Mammary epithelial cell (primary cell): ENCODE measurements at regions of chr17 and their contacts with region 1.

Region 1: DNA sequence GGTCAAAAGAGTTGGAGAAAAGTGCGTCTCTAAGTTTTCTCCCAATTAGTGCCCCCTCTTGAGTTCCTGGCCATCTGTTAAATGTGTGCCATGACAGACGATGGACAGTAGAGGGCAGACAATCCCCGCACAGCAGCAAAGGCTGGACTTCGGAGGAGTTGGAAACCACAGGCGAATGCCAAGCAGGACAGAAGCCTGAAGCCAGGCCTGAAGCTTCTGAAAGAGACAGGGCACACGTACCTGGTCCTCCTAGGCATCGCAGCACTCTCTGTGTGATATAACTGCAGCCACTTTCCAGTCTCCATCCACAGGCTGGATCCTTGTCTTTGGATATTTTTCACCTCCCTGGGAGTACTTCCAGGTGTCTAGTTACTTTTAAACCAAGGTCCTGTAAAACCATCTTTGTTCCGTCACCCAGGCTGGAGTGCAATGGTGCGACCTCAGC is 14.5 kb downstream of the C17orf100 start:
- DNase-seq: peak; percentile 74
- H3K4me3 ChIP-seq: no peak overlapping the region
- H3K27ac ChIP-seq: no peak overlapping the region
- H3K4me1 ChIP-seq: peaks cover 31% of the 10 kb centered on the region
- H3K27me3 ChIP-seq: no peaks in the 10 kb centered on the region
- CTCF ChIP-seq: peak; percentile 95 to 97

Region 2: DNA sequence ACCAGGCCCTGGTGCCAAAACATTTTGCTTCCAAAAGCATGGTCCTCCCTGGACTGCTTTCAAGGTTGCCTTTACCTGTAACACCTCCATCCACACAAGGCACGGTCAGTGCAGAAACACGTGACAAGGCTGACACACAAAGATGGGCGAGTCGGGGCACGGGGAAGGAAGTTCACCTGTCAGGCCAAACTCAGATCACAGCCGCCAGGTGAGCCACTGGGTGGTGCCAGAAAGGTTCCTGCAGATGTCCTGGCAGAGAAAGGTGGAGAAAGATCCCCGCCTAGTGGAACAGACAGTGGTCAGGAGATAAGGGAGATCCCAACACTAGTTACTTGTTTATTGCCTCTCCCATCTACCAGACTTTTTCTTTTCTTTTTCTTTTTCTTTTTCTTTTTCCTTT is 386.4 kb before region 1 on chr17:
- CTCF ChIA-PET with region 1: no interaction called
- dilution Hi-C with region 1: no loop called
- in situ Hi-C with region 1: no loop called
- intact Hi-C with region 1: loop called (anchors 10 kb)
- DNase-seq: peak; percentile 88
- H3K4me3 ChIP-seq: no peak overlapping the region
- H3K27ac ChIP-seq: no peak overlapping the region
- H3K4me1 ChIP-seq: no peaks in the 10 kb centered on the region
- H3K27me3 ChIP-seq: no peaks in the 10 kb centered on the region
- CTCF ChIP-seq: peak; percentile 89 to 94

Region 3: DNA sequence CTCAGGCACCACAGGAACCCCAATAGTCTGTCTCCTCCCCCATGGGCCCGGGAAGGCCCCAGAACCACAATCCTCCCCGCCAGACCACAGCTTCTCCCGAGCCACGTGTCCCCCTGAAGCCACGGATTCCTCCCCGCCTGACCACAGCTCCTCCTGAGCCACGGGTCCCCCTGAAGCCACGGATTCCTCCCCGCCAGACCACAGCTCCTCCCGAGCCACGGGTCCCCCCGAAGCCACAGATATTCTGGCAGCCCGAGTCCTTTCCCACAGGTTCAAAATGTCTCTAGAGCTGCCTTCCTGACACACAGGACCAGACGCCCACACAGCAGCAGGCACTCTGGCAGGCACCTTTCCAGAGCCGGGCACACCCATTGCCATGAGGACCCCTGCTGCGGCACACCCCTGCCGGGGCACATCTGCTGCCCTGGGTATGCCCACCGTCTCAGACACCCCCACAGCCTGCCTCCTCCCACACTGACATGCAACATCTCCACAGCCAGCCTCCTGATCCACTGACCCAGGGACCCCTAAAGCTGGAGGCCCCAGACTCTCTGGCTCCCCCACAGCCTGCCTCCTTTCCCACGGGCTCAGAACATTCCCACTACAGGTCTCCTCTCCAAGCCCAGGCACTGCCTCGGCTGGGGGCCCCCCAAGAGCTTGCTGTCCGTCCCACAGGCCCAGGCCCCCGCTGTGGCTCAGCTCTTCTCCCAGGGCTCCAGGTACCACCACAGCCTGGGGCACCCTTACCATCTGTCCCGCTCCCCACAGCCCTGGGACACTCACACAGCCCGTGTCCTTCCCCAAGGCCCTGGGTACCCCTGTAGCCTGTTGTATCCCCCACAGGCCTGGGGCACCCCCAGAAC is 27.8 kb before region 1 on chr17:
- CTCF ChIA-PET with region 1: no interaction called
- dilution Hi-C with region 1: no loop called
- in situ Hi-C with region 1: no loop called
- intact Hi-C with region 1: no loop called
- DNase-seq: no peak
- H3K4me3 ChIP-seq: peak overlapping the region in 2 of 3 experiments; percentile 79 to 97
- H3K27ac ChIP-seq: no peak overlapping the region
- H3K4me1 ChIP-seq: peaks cover 22% of the 10 kb centered on the region
- H3K27me3 ChIP-seq: no peaks in the 10 kb centered on the region
- CTCF ChIP-seq: no peak

Region 4: DNA sequence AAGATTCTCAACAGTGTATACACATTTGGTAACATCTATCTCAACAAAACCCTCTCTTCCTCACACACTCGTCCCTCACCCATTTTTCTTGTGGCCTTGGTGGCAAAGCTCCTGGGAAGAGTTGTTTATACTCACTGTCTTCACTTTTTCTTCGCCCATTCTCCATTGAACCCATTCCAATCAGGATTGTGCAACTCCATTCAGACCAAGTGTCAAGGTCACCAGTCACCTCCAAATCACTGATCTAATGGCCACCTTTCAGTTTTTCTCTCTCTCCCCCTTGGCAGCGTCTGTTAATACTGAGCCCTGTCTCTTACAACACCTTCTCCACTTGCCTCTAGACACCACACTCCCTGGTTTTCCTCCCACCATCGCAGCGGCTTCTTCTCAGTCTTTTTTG is 55.6 kb after region 1 on chr17:
- CTCF ChIA-PET with region 1: no interaction called
- dilution Hi-C with region 1: no loop called
- in situ Hi-C with region 1: no loop called
- intact Hi-C with region 1: loop called (anchors 2 kb)
- DNase-seq: no peak
- H3K4me3 ChIP-seq: no peak overlapping the region
- H3K27ac ChIP-seq: no peak overlapping the region
- H3K4me1 ChIP-seq: no peaks in the 10 kb centered on the region
- H3K27me3 ChIP-seq: no peaks in the 10 kb centered on the region
- CTCF ChIP-seq: no peak

Region 5: GRCh38 chr17:6796887-6797490 is 130.9 kb after region 1 on chr17:
- CTCF ChIA-PET with region 1: no interaction called
- dilution Hi-C with region 1: no loop called
- in situ Hi-C with region 1: no loop called
- intact Hi-C with region 1: loop called (anchors 5 kb)
- DNase-seq: peak; percentile 94
- H3K4me3 ChIP-seq: no peak overlapping the region
- H3K27ac ChIP-seq: peak overlapping the region; percentile 6
- H3K4me1 ChIP-seq: peaks cover 21% of the 10 kb centered on the region
- H3K27me3 ChIP-seq: no peaks in the 10 kb centered on the region
- CTCF ChIP-seq: no peak

Region 6: DNA sequence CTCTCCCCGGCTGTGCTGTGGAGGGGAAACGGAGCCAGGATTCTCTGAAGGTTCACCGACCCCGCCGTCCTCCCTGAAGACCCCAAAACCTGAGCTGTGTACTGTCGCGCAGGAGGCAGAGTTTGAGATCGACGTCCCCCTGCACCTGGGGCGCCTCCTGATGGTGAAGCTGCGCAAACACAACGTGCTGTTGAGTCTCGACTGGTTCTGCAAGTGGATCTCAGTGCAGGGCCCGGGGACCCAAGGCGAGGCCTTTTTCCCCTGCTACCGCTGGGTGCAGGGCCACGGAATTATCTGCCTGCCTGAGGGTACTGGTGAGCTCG is 228.1 kb after region 1 on chr17:
- CTCF ChIA-PET with region 1: no interaction called
- dilution Hi-C with region 1: no loop called
- in situ Hi-C with region 1: no loop called
- intact Hi-C with region 1: loop called (anchors 1 kb)
- DNase-seq: no peak
- H3K4me3 ChIP-seq: no peak overlapping the region
- H3K27ac ChIP-seq: no peak overlapping the region
- H3K4me1 ChIP-seq: no peaks in the 10 kb centered on the region
- H3K27me3 ChIP-seq: no peaks in the 10 kb centered on the region
- CTCF ChIP-seq: peak; percentile 37 to 56

Region 7: GRCh38 chr17:6995431-6996255 is 329.5 kb after region 1 on chr17 and contains the start of gene ALOX12:
- CTCF ChIA-PET with region 1: no interaction called
- dilution Hi-C with region 1: no loop called
- in situ Hi-C with region 1: loop called in 1 of 2 experiments (anchors 5 kb)
- intact Hi-C with region 1: no loop called
- DNase-seq: no peak
- H3K4me3 ChIP-seq: peak within 1 kb of the TSS; percentile 41 to 79 (median 61)
- H3K27ac ChIP-seq: no peak within 1 kb of the TSS
- H3K4me1 ChIP-seq: peaks cover 8% of the 10 kb centered on the region
- H3K27me3 ChIP-seq: no peaks in the 10 kb centered on the region
- CTCF ChIP-seq: no peak
- total RNA-seq, gene ALOX12: not detected

Region 8: GRCh38 chr17:7014261-7014994 is 348.3 kb after region 1 on chr17:
- CTCF ChIA-PET with region 1: no interaction called
- dilution Hi-C with region 1: no loop called
- in situ Hi-C with region 1: loop called in 1 of 2 experiments (anchors 10 kb)
- intact Hi-C with region 1: no loop called
- DNase-seq: peak; percentile 97
- H3K4me3 ChIP-seq: peak overlapping the region; percentile 80 to 95 (median 81)
- H3K27ac ChIP-seq: peak overlapping the region; percentile 93
- H3K4me1 ChIP-seq: peaks cover 24% of the 10 kb centered on the region
- H3K27me3 ChIP-seq: no peaks in the 10 kb centered on the region
- CTCF ChIP-seq: peak; percentile 29 to 60